Calu3 (cell line): ENCODE measurements at regions of chr5 and their contacts with region 1.

Region 1: GRCh38 chr5:71522151-71522550 is 65.0 kb upstream of the MCCC2 start:
- DNase-seq: no peak
- H3K4me3 Mint-ChIP-seq: no peak overlapping the region
- H3K27ac Mint-ChIP-seq: no peak overlapping the region
- H3K4me1 Mint-ChIP-seq: no peaks in the 10 kb centered on the region
- H3K27me3 Mint-ChIP-seq: no peaks in the 10 kb centered on the region
- CTCF ChIP-seq: no peak

Region 2: DNA sequence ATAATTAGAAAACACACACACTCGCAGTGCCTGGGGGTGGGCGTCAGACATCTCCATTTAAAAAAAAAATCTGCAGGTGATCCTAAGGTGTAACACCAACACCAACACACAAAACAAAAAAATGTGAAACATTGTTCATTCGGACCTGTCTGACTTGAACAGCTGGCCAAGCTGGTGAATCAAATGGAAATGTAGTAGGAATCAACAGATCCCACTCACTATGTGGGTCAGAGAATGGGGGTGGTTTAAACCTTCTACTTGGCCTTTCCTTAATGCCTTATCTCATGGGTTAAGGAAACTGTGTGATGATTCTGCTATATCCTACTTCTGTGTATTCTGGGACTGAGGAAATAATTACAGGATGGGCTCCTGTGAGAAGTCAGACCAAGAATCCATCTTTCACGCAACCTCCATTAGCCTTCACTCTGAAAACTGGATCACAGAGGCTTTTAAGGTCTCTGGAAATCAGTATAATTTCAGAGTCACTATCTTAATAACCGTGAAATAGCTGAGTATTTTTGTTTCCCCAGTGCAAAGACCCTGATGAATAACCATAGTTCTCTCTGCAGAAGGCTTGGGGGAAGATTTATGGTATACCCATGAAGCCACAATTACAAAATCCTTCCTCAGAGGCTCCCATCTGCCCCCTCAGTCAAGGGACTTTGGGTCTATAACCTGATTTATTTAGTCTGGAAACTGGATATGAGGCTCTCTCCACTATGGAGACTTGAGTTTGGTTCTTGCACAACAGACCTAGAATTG is 47.8 kb after region 1 on chr5:
- CTCF ChIA-PET with region 1: no interaction called
- intact Hi-C with region 1: loop called (anchors 10 kb)
- DNase-seq: no peak
- H3K4me3 Mint-ChIP-seq: no peak overlapping the region
- H3K27ac Mint-ChIP-seq: no peak overlapping the region
- H3K4me1 Mint-ChIP-seq: no peaks in the 10 kb centered on the region
- H3K27me3 Mint-ChIP-seq: no peaks in the 10 kb centered on the region
- CTCF ChIP-seq: no peak